ENCODE measurements at regions of chr14 and their contacts with region 1.

Region 1: DNA sequence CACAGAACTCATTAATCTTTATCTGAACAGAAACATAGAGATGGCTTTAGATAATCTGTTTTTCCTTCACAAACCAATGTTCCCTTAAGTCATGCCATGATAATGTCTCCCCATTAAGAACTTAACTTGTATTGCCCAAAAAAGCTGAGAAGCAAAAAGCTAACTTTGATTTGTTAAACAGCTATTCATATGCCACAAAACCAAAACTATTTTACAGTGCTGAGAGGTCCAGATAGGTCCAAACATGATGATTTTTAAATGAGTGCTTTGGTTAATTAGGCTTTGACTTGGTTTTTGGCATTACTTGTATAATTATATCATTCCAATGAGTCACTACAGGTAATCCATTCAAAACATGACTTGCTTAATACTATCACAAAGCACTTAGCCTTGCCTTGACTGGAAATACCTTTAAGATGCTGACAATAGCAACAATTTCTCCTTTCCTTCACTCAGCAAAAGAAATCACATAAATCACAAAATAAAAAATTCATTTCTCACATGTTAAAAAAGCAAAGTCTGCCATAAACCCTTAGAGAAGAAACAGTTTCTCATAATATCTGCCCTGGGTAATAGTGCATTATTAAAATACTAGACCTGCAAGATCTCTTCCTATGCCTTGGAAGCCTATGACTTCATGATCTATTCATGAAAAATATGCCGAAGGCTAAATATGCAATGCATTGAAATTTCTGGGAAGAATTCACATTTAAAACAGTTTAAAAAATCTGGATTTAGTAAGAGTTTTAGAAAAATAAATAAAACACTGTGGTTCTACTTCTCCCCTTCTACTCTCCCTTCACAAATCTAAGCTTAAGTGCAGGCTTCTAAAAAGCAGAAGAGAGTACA is 52.0 kb upstream of the SAV1 start:
- DNase-seq: no peak
- H3K4me3 ChIP-seq: no peak overlapping the region
- H3K4me3 Mint-ChIP-seq: no peak overlapping the region
- H3K27ac ChIP-seq: no peak overlapping the region
- H3K27ac Mint-ChIP-seq: peak overlapping the region in 2 of 7 donors; percentile 3 to 30
- H3K4me1 ChIP-seq: peaks cover 1% of the 10 kb centered on the region
- H3K4me1 Mint-ChIP-seq: peaks cover 0 to 7% (median 0%) of the 10 kb centered on the region in 4 donors
- H3K27me3 ChIP-seq: no peaks in the 10 kb centered on the region
- H3K27me3 Mint-ChIP-seq: no peaks in the 10 kb centered on the region

Region 2: GRCh38 chr14:50688875-50689274 is 31.3 kb before region 1 on chr14:
- CTCF ChIA-PET with region 1: no interaction called
- POLR2A ChIA-PET with region 1: no interaction called
- intact Hi-C with region 1: no loop called
- DNase-seq: no peak
- H3K4me3 ChIP-seq: no peak overlapping the region
- H3K4me3 Mint-ChIP-seq: no peak overlapping the region
- H3K27ac ChIP-seq: no peak overlapping the region
- H3K27ac Mint-ChIP-seq: no peak overlapping the region
- H3K4me1 ChIP-seq: no peaks in the 10 kb centered on the region
- H3K4me1 Mint-ChIP-seq: no peaks in the 10 kb centered on the region
- H3K27me3 ChIP-seq: no peaks in the 10 kb centered on the region
- H3K27me3 Mint-ChIP-seq: peaks cover 1 to 3% of the 10 kb centered on the region in 2 donors

Region 3: DNA sequence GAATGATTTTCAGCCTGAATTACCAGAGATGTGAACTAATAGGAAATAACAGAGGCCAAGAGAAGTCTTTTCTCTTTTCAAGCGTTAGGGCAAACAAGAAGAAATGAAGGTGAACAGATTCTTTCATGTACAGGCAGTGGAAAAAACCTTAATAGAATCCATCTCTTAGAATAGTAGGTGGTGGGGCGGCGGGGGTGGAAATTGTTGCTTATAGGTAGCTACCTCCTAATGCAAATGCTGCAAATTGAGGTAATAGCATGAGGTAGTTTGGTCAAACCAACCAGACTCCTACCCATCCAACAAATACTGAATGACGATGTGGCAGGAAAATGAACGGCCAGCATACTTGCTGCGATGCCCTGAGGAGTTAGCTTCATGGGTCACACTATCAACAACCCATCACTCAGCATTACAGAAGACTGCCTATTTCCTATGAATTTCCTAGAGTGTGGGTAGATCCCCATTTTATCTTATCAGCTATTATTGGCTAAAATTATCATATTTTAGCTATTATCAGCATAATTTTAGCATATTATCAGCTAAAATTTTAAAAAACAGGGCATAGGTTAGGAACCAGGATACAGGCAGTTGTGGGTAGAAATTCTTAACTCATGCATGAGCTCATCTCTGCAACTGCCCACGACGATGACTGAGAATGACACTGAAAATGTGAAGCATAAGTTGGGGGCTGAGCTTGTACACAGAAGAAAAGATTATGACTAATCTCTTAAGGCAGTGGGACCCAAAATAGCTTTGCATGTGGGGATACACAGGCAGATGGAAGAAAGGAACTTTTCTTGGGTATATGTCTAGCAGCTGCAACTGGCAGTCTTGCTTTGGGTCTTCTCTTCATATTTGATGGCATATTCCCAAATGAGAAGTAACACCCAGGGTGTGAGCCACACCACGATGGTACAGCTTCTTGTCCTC is 42.1 kb after region 1 on chr14:
- CTCF ChIA-PET with region 1: interaction called, 7 read pairs
- POLR2A ChIA-PET with region 1: no interaction called
- intact Hi-C with region 1: loop called (anchors 5 kb)
- DNase-seq: no peak
- H3K4me3 ChIP-seq: no peak overlapping the region
- H3K4me3 Mint-ChIP-seq: no peak overlapping the region
- H3K27ac ChIP-seq: no peak overlapping the region
- H3K27ac Mint-ChIP-seq: peak overlapping the region in 1 of 7 donors; percentile 69
- H3K4me1 ChIP-seq: no peaks in the 10 kb centered on the region
- H3K4me1 Mint-ChIP-seq: peaks cover 0 to 4% (median 2%) of the 10 kb centered on the region in 4 donors
- H3K27me3 ChIP-seq: no peaks in the 10 kb centered on the region
- H3K27me3 Mint-ChIP-seq: no peaks in the 10 kb centered on the region

Region 4: GRCh38 chr14:50804181-50804721 is 84.1 kb after region 1 on chr14:
- CTCF ChIA-PET with region 1: no interaction called
- POLR2A ChIA-PET with region 1: no interaction called
- intact Hi-C with region 1: no loop called
- DNase-seq: no peak
- H3K4me3 ChIP-seq: no peak overlapping the region
- H3K4me3 Mint-ChIP-seq: no peak overlapping the region
- H3K27ac ChIP-seq: no peak overlapping the region
- H3K27ac Mint-ChIP-seq: peak overlapping the region in 1 of 7 donors; percentile 71
- H3K4me1 ChIP-seq: peaks cover 7% of the 10 kb centered on the region
- H3K4me1 Mint-ChIP-seq: peaks cover under 1 to 33% (median 19%) of the 10 kb centered on the region in 4 donors
- H3K27me3 ChIP-seq: no peaks in the 10 kb centered on the region
- H3K27me3 Mint-ChIP-seq: no peaks in the 10 kb centered on the region